K562 (cell line): ENCODE measurements at regions of chr10 and their contacts with region 1.

Region 1: DNA sequence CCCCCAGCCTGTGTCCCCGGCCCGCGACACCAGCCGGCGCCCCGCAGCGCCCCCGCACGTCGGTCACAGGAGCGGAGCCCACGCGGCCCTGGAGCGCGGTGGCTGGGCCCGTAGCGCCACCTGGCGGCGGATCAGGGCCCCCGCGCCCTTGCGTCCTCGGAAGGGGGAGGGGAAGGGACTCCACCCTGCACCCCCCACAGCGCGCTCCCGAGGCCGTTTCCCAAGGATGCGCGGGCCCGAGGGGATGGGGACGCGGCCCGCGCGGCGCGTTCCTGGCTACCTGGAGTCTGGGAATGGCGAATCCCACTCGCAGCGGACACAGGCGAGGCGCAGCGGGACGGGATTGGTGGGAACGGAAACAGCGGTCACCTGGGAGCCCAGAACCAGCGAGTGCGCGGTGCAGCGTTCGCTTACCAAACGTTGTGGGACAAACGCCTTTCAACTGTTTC is 23.8 kb upstream of the MKI67 start:
- DNase-seq: peak; percentile 80 to 91 (median 90)
- ATAC-seq: peak; percentile 99
- H3K4me3 ChIP-seq: peak overlapping the region; percentile 45
- H3K27ac ChIP-seq: no peak overlapping the region
- H3K4me1 ChIP-seq: peaks cover 0 to 13% of the 10 kb centered on the region in 2 experiments; a peak in 2 of 5 replicates
- H3K27me3 ChIP-seq: peaks cover 2 to 19% of the 10 kb centered on the region in 2 experiments; a peak in 3 of 5 replicates
- CTCF ChIP-seq: peak; percentile 78 to 98 (median 97)
- EP300 ChIP-seq: no peak
- POLR2A ChIP-seq: no peak
- RAD21 ChIP-seq: peak; percentile 55 to 83

Region 2: GRCh38 chr10:128078136-128078969 is 71.7 kb before region 1 on chr10:
- CTCF ChIA-PET with region 1: interaction called, 14 read pairs
- POLR2A ChIA-PET with region 1: no interaction called
- in situ Hi-C with region 1: no loop called
- intact Hi-C with region 1: loop called (anchors 1 kb)
- DNase-seq: peak; percentile 45 to 56 (median 49)
- ATAC-seq: peak; percentile 93
- H3K4me3 ChIP-seq: no peak overlapping the region
- H3K27ac ChIP-seq: no peak overlapping the region
- H3K4me1 ChIP-seq: no peaks in the 10 kb centered on the region
- H3K27me3 ChIP-seq: peaks cover 0 to 32% of the 10 kb centered on the region in 2 experiments; a peak in 3 of 5 replicates
- CTCF ChIP-seq: peak; percentile 54 to 66 (median 65)
- EP300 ChIP-seq: no peak
- POLR2A ChIP-seq: no peak
- RAD21 ChIP-seq: peak in 1 of 2 experiments; percentile 68; a peak in 3 of 4 replicates